ENCODE measurements at regions of chr6 and their contacts with region 1.

Region 1: GRCh38 chr6:119349323-119350042 is at the start of gene MAN1A1:
- DNase-seq: peak; percentile 90
- ATAC-seq: peak; percentile 97
- total RNA-seq, gene MAN1A1: 30.3 to 45.0 TPM

Region 2: DNA sequence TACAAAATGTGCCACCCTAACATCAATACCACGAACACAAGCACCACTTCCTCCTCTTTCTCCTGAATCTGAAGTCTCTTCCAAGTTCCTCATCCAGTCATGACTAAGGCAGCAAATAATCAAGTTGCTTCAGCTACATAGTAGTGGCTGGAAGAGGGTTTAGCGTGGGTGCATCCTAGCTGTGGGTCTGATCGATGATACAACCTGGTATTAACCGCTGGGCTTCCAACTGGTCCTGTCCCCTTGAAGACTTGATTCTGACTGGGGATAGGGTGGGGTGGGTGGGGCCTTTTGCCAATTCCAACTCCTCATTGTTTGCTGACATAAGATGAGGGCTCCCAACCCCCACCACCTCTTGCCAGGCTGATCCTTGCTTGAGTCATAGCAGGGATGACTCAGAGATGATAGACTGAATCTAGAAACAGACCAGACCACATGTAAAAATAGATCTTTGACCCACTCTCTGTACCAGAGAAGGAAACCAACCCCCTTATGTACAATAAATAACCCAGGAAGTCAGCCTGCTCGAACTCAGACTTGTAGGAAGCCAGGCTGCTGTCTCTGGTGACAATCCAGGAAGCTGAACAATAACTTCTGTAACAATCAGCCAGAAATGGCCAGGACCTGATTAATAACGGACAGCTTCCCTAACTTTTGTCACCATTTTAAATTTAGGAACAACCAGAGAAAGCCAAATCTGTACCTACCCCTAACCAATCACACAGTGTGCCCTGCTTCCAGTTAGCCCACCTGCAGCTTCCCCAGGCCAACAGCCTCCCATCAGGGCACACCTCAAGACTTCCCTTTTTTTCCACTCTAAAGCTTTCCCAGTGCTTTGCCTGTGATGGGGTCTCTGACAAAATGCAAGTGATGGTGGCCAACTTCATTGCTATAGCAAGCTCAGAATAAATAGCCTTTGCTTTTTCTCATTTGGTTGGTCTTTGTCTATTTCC is 202.1 kb before region 1 on chr6:
- intact Hi-C with region 1: loop called in 1 of 2 experiments (anchors 10 kb)
- DNase-seq: peak; percentile 64
- ATAC-seq: peak; percentile 54 to 96

Region 3: DNA sequence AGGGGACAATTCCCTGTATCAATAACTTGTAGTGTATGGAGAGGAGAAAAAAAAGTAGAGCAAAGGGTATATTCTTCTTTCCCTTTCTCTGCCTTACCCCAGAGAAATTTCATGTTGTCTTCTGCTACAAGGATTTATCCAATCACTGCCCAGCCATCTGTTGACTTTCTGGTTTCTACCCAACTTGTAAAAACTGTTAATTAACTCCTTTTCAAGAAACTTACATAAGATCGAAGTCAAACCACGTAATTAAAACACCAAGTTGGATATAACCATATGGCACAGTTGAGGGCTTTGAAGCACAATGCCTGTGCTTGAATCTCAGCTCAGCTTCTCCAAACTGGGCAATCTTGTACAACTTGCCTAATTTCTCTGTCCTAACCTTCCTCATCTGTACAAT is 99.4 kb before region 1 on chr6:
- intact Hi-C with region 1: no loop called
- DNase-seq: no peak
- ATAC-seq: no peak

Measured in left cardiac atrium (tissue), 4 donors.